HEK293T (cell line): ENCODE measurements at regions of chr17 and their contacts with region 1.

Region 1: DNA sequence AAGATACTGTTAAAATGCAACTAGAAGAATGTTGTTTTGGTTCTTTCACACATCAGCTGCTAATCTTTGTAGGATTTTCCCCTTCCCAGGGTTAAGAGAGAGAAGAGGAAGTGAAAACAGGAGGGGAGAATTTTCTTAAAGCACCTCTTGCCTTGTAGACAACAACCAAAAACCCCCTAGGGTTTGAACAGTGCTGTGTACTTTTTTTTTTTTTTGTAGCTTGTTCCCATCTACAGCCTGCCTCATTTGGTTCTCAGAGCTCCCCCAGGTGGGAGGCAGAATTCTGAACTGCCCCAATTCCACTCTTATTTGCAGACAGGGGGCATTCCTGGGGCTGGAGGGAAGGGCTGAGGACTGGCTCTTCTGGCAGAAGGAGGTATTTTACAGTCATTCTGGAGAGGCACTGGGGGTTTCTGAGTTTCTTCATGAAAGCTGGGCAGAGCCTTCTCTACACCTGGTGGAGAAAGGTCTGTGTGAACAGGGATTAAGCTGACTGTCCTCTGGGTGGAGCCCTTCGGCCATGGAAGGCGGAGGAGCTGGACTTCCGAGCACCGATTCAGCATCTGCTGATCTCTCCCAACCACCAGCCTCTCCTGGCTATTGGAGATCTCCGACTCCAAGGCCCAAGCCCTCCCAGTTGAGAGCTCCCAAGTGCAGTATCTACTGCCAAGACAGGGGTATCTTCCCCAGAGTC is 32.2 kb downstream of the SMARCE1 start:
- DNase-seq: peak; percentile 58

Region 2: GRCh38 chr17:40632216-40632615 is 16.8 kb after region 1 on chr17:
- CTCF ChIA-PET with region 1: no interaction called
- POLR2A ChIA-PET with region 1: no interaction called
- DNase-seq: no peak

Region 3: GRCh38 chr17:40664582-40665333 is 49.3 kb after region 1 on chr17 and contains the start of gene KRT222:
- CTCF ChIA-PET with region 1: no interaction called
- POLR2A ChIA-PET with region 1: no interaction called
- DNase-seq: no peak

Region 4: DNA sequence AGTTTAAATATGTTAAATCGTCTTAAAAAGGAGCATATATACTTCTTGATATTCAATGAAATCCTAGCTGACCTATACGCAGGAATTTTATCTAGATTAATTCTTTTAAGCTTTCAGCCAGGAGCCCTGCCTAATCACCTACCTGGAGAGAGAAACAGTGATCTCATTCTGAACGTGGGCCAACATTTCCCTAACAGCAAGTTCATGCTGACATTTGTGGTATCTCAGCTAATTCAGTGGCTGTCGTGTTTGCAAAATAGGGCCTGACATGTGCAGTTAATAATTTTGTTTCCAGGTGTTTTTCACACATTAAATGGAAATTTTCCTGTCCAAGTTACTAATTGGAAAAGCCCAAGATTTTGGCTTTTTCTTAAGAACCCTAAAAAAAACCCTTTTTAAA is 70.8 kb after region 1 on chr17:
- CTCF ChIA-PET with region 1: no interaction called
- POLR2A ChIA-PET with region 1: no interaction called
- DNase-seq: no peak

Region 5: DNA sequence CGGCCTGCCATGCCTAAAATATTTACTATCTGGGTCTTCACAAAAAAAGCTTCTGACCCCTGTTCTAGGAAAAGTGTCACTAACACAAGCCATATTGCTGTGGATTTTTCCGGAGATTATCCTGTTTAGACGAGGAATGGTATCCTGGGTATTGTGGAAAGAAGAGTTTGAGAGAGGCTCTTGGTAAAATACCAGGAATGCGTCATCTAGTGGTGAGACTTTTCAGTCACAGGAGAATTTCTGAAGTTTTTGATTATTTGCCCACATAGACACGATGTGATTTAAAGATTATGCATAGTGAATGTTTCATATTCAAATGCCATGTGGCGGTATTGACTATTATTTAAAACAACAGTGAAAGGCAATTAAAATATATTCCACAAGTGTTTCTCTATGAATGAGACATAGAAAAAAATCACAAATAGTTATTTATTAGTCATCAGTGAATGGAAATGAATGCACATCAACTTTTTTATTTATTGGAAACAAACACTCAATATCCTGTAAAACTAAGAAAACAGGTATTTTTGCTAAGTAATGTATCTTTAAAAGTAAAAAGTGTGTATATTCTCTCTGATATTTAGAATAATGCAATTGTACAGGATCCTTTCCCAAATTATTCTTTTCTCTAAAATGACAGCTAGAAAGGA is 176.5 kb after region 1 on chr17:
- CTCF ChIA-PET with region 1: interaction called, 15 read pairs
- POLR2A ChIA-PET with region 1: no interaction called
- DNase-seq: peak; percentile 10